Activated naive CD4-positive, alpha-beta T cell treated with anti-CD3 and anti-CD28 coated beads for 36 hours (primary cell): ENCODE measurements at regions of chr14 and their contacts with region 1.

Region 1: GRCh38 chr14:23588884-23589598 is 10.5 kb upstream of the JPH4 start:
- DNase-seq: peak; percentile 91
- H3K4me3 Mint-ChIP-seq: no peak overlapping the region
- H3K27ac Mint-ChIP-seq: no peak overlapping the region
- H3K4me1 Mint-ChIP-seq: peaks cover 3% of the 10 kb centered on the region
- H3K27me3 Mint-ChIP-seq: peaks cover 15% of the 10 kb centered on the region

Region 2: GRCh38 chr14:23512156-23512555 is 76.9 kb before region 1 on chr14:
- CTCF ChIA-PET with region 1: no interaction called
- intact Hi-C with region 1: no loop called
- DNase-seq: peak; percentile 26
- H3K4me3 Mint-ChIP-seq: peak overlapping the region; percentile 33
- H3K27ac Mint-ChIP-seq: no peak overlapping the region
- H3K4me1 Mint-ChIP-seq: peaks cover 3% of the 10 kb centered on the region
- H3K27me3 Mint-ChIP-seq: no peaks in the 10 kb centered on the region

Region 3: DNA sequence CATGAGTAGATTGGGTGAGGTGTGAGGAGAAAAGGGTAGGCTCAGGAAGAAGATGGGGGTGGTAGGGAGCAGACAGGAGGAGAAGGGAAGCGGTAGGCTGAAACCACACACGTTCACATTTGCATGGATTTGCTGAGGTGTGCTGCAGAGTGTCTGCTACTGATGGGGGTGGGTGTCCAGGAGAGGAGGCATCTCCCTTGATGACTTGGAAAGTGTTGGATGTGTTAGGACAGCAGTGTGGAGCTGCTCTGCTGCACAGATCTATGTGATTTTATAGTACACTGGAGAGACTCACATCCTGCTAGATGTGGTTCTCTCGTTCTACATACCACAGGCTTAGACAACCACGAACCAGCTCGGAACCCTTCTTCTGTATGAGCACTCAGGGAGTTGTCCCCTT is 46.8 kb before region 1 on chr14:
- CTCF ChIA-PET with region 1: no interaction called
- intact Hi-C with region 1: no loop called
- DNase-seq: no peak
- H3K4me3 Mint-ChIP-seq: no peak overlapping the region
- H3K27ac Mint-ChIP-seq: no peak overlapping the region
- H3K4me1 Mint-ChIP-seq: no peaks in the 10 kb centered on the region
- H3K27me3 Mint-ChIP-seq: no peaks in the 10 kb centered on the region

Region 4: GRCh38 chr14:23605931-23606585 is 17.0 kb after region 1 on chr14:
- CTCF ChIA-PET with region 1: interaction called, 17 read pairs
- intact Hi-C with region 1: no loop called
- DNase-seq: peak; percentile 20
- H3K4me3 Mint-ChIP-seq: no peak overlapping the region
- H3K27ac Mint-ChIP-seq: no peak overlapping the region
- H3K4me1 Mint-ChIP-seq: peaks cover 35% of the 10 kb centered on the region
- H3K27me3 Mint-ChIP-seq: no peaks in the 10 kb centered on the region

Region 5: DNA sequence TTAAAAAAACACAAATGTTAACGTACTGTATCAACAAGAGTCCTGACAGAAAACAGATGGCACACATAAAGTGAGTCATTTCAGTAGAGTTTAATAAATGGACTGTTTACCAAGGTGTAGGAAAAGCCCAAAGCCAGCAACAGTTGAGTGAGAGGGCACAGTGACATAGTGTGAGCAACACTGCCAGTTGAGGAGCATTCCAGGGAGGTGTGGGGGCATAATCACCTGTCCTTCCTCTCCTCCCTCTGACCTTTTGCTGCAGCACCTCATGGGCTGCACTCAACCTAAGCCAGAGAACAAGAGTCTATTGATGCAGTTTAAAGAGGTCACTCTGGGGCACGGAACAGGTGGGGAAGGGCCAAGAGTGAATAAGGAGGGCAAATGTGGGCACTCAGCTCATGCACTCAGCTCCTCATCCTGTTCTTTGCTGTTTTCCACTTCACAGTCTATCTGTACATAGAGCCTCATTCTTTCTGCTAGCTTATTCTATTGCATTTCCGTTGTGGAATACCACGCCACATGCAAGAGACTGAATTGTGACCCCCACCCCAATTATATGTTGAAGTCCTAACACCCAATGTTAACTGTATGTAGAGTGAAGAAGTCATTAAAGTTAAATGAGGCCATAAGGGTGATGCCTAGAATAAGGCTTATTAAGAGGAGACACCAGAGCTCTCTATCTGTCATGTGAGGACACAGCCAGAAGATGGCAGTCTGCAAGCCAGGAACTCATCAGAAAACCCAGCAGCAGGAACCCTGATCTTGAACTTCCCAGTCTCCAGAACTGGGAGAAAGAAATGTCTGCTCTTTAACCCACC is 76.5 kb after region 1 on chr14:
- CTCF ChIA-PET with region 1: interaction called, 3 read pairs
- intact Hi-C with region 1: loop called (anchors 1 kb)
- DNase-seq: peak; percentile 55
- H3K4me3 Mint-ChIP-seq: no peak overlapping the region
- H3K27ac Mint-ChIP-seq: no peak overlapping the region
- H3K4me1 Mint-ChIP-seq: no peaks in the 10 kb centered on the region
- H3K27me3 Mint-ChIP-seq: no peaks in the 10 kb centered on the region

Region 6: DNA sequence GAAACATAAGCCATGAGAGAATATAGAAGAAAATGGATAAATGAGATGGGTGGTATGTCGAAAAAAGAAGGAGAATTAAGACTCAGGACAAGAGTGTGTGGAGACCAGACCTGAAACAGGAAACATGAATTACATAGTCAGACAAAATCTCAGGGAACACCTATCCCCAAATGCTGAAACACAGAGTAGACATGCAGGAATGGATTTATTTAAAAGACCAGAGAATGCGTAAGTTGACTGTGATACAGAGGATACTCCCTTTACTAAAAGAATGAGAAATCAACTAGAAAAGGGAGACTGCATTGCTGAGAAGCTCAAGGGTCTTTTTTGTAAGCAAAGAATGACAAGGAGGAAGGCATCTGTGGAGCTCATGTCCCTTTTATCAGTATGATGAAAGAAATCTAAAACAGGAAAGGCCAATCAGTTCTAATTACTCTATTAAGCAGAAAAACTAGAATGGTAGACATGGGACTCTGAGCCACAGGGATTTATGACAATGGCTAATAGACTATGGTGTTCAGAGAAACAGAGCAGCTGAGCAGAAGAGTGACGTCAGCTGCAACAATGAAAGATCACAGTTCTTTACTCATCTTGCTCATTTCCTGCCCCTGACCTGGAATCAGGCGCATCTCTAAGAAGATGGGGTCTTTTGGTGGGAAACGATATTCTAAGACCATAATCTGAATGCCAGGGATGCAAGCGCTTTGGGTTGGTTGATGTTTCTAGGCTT is 225.7 kb after region 1 on chr14:
- CTCF ChIA-PET with region 1: no interaction called
- intact Hi-C with region 1: no loop called
- DNase-seq: no peak
- H3K4me3 Mint-ChIP-seq: no peak overlapping the region
- H3K27ac Mint-ChIP-seq: no peak overlapping the region
- H3K4me1 Mint-ChIP-seq: no peaks in the 10 kb centered on the region
- H3K27me3 Mint-ChIP-seq: no peaks in the 10 kb centered on the region

Region 7: GRCh38 chr14:23910101-23910875 is 321.2 kb after region 1 on chr14:
- CTCF ChIA-PET with region 1: interaction called, 11 read pairs
- intact Hi-C with region 1: loop called (anchors 1 kb)
- DNase-seq: peak; percentile 44
- H3K4me3 Mint-ChIP-seq: no peak overlapping the region
- H3K27ac Mint-ChIP-seq: no peak overlapping the region
- H3K4me1 Mint-ChIP-seq: no peaks in the 10 kb centered on the region
- H3K27me3 Mint-ChIP-seq: peaks cover 7% of the 10 kb centered on the region

Region 8: DNA sequence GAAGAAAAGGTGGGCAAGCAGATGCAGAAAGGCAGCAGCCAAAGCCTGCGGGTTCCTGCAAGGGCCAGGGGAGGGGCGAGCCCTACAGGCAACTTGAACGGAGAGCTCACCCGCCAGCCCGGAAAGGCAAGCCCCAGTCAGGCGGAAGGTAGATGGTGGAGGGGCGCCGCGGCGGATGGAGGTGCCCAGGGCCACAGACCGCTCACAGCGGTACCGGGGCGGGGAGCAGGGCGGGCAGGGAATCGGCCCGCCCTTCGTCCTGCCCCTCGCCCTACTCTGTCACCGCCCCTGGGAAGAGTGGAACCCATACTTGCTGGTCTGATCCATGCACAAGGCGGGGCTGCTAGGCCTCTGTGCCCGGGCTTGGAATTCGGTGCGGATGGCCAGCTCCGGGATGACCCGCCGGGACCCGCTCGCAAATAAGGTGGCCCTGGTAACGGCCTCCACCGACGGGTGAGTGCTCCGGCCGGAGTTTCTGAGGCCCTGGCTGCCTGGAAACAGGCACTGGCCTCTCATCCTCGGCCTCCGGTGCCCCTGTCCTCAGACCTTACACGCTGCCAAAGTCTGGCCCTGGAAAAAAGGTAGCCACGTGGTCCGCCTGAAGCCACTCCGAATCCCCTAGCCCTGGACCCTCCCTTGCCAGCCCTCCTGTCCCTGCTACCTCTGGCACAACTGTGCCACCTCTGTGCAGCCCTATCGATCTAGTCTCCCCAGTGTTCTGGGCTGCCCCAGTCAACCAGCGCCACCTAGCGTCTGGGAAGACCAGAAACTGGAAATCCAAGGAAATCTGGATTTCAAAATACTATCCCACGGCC is 364.6 kb after region 1 on chr14 and contains the start of gene DHRS4:
- CTCF ChIA-PET with region 1: interaction called, 3 read pairs
- intact Hi-C with region 1: loop called (anchors 1 kb)
- DNase-seq: peak; percentile 87
- H3K4me3 Mint-ChIP-seq: peak within 1 kb of the TSS; percentile 99
- H3K27ac Mint-ChIP-seq: peak within 1 kb of the TSS; percentile 94
- H3K4me1 Mint-ChIP-seq: peaks cover 22% of the 10 kb centered on the region
- H3K27me3 Mint-ChIP-seq: no peaks in the 10 kb centered on the region
- total RNA-seq, gene DHRS4: 22.8 to 24.0 TPM